Common myeloid progenitor, CD34-positive (primary cell): ENCODE measurements at regions of chr11 and their contacts with region 1.

Region 1: DNA sequence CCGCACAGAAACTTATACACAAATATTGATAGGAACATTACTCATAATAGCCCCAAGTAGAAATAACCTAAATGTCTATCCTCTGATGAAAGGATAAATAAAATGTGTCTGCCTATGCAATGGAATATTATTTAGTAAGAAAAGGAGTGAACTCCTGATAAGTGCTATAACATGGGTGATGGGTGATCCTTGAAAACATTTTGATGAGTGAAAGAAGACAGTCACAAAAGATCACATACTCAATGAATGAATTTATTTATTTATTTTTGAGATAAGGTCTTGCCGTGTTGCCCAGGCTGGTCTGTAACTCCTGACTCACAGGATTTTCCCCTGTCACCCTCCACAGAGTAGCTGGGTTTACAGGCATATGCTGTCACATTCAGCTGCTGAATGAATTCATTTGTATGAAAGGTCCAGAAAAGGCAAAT is 17.3 kb downstream of the RNF121 start:
- DNase-seq: no peak
- H3K4me3 ChIP-seq: no peak overlapping the region
- H3K27ac ChIP-seq: no peak overlapping the region
- H3K4me1 ChIP-seq: peaks cover 0 to 16% (median 8%) of the 10 kb centered on the region in 4 experiments
- H3K27me3 ChIP-seq: no peaks in the 10 kb centered on the region

Region 2: GRCh38 chr11:71928737-71929452 is 17.3 kb before region 1 on chr11 and contains the start of gene RNF121:
- CTCF ChIA-PET with region 1: interaction called, 6 read pairs
- POLR2A ChIA-PET with region 1: interaction called, 11 read pairs
- DNase-seq: peak; percentile 96 to 99 (median 98)
- H3K4me3 ChIP-seq: peak within 1 kb of the TSS; percentile 84 to 100 (median 91)
- H3K27ac ChIP-seq: peak within 1 kb of the TSS; percentile 99 to 100
- H3K4me1 ChIP-seq: peaks cover 10 to 26% (median 23%) of the 10 kb centered on the region in 4 experiments
- H3K27me3 ChIP-seq: no peaks in the 10 kb centered on the region

Region 3: DNA sequence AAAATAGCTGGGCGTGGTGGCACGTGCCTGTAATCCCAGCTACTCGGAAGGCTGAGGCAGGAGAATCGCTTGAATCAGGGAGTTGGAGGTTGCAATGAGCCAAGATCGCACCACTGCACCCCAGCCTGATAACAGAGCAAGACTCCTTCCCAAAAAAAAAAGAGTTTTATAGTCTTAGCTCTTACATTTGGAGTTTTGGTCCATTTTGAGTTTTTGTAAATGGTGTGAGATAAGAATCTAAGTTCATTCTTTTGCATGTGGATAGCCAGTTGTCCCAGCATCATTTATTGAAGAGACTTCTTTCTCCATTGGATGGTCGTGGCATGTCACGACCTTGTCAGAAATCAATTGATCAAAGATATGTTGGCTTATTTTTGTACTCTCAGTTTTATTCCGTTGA is 17.3 kb after region 1 on chr11:
- CTCF ChIA-PET with region 1: no interaction called
- POLR2A ChIA-PET with region 1: no interaction called
- DNase-seq: no peak
- H3K4me3 ChIP-seq: no peak overlapping the region
- H3K27ac ChIP-seq: no peak overlapping the region
- H3K4me1 ChIP-seq: peaks cover 9 to 21% (median 14%) of the 10 kb centered on the region in 4 experiments
- H3K27me3 ChIP-seq: no peaks in the 10 kb centered on the region